ENCODE measurements at regions of chr1 and their contacts with region 1.

Region 1: GRCh38 chr1:232923739-232924386 is 26.5 kb upstream of the NTPCR start:
- DNase-seq: peak in 8 of 9 donors; percentile 46 to 90 (median 84)
- ATAC-seq: peak; percentile 96
- H3K4me3 ChIP-seq: no peak overlapping the region
- H3K4me3 Mint-ChIP-seq: peak overlapping the region; percentile 58 to 89 (median 80)
- H3K27ac ChIP-seq: peak overlapping the region; percentile 49
- H3K27ac Mint-ChIP-seq: peak overlapping the region; percentile 87 to 96 (median 93)
- H3K4me1 ChIP-seq: peaks cover 30 to 41% of the 10 kb centered on the region in 2 donors
- H3K4me1 Mint-ChIP-seq: peaks cover 36 to 64% (median 45%) of the 10 kb centered on the region in 7 donors
- H3K27me3 ChIP-seq: no peaks in the 10 kb centered on the region
- H3K27me3 Mint-ChIP-seq: no peaks in the 10 kb centered on the region

Region 2: DNA sequence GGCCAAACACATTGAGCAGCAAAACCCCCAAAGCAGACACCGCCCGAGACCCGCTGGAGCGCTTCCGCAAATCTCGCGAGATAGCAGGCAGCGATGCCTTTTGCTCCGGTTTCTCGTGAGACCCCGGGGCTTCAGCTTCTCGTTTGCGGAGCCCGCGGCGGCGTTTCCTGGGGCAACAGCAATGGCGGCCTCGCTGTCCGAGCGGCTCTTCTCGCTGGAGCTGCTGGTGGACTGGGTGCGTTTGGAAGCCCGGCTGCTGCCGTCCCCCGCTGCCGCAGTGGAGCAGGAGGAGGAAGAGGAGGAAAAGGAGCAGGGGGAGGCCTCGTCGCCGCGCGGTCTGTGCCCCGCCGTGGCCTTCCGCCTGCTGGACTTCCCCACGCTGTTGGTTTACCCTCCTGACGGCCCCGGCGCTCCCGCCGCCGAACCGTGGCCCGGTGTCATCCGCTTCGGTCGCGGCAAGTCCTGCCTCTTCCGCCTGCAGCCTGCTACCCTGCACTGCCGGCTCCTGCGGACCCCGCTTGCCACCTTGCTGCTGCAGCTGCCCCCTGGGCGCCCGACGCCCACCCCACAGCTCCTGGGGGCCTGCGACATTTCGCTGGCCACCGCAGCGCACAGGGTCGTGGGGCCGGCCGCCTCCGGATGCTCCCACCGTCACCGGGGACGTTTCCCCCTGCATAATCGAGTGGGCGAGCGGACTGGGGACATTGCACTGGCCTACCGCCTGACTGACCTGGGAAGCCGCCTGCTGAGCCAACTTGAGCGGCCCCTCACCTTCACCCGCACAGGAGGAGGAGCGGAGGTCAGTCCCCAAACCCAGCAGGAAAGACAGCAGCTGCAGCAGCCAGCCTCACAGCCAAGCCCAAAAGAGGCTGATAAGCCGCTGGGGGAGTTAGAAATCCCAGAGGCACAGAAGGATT is 118.3 kb before region 1 on chr1 and contains the start of gene MAP10:
- CTCF ChIA-PET with region 1: no interaction called
- POLR2A ChIA-PET with region 1: no interaction called
- intact Hi-C with region 1: loop called (anchors 10 kb)
- DNase-seq: peak; percentile 46 to 79 (median 69)
- ATAC-seq: peak; percentile 83
- H3K4me3 ChIP-seq: peak within 1 kb of the TSS; percentile 65
- H3K4me3 Mint-ChIP-seq: peak within 1 kb of the TSS; percentile 82 to 93 (median 88)
- H3K27ac ChIP-seq: peak within 1 kb of the TSS; percentile 64
- H3K27ac Mint-ChIP-seq: peak within 1 kb of the TSS; percentile 60 to 95 (median 87)
- H3K4me1 ChIP-seq: peaks cover 7 to 12% of the 10 kb centered on the region in 2 donors
- H3K4me1 Mint-ChIP-seq: peaks cover 10 to 35% (median 22%) of the 10 kb centered on the region in 7 donors
- H3K27me3 ChIP-seq: no peaks in the 10 kb centered on the region
- H3K27me3 Mint-ChIP-seq: peaks cover 0 to 12% (median 0%) of the 10 kb centered on the region in 5 donors
- total RNA-seq, gene MAP10: 1.5 to 4.5 (median 3.2) TPM

Region 3: DNA sequence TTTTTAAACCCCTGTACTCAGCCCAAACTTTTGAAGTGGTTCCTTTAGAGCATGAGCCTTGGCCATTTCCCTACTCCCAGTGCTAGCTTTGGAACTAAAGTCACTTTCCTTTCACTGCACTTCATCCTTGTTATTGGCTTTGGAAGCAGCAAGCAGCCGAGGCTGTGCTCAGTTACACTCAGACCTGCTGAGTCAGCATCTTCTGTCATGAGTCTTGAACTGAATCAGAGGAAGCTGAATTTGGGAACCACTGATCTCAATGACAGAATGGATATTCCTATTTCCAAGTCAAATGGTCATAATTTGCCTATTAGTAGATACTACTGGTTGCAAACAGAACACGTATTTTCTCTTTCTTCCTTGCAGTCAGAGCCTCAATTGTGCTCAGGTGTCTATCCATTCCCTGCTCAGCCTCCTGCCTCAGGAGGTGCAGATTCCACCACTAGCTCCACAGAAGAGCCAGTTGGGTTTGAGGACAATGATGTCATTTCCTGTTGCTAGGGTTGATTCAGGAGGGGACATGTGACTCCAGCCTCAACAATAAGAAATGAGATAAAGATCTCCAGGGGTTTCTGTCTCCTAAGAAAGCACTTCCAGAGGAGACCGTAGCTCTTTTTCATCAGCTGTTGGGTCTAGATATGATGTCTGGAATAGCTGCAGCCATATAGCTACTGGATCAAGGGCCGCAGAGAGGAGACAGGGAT is 18.4 kb before region 1 on chr1:
- CTCF ChIA-PET with region 1: no interaction called
- POLR2A ChIA-PET with region 1: no interaction called
- intact Hi-C with region 1: loop called in 1 of 2 experiments (anchors 1 kb)
- DNase-seq: no peak
- ATAC-seq: no peak
- H3K4me3 ChIP-seq: no peak overlapping the region
- H3K4me3 Mint-ChIP-seq: peak overlapping the region in 1 of 10 donors; percentile 72
- H3K27ac ChIP-seq: no peak overlapping the region
- H3K27ac Mint-ChIP-seq: peak overlapping the region in 3 of 9 donors; percentile 9 to 47 (median 37)
- H3K4me1 ChIP-seq: peaks cover 0 to 26% of the 10 kb centered on the region in 2 donors
- H3K4me1 Mint-ChIP-seq: peaks cover 25 to 63% (median 43%) of the 10 kb centered on the region in 7 donors
- H3K27me3 ChIP-seq: no peaks in the 10 kb centered on the region
- H3K27me3 Mint-ChIP-seq: peaks cover 0 to 4% (median 3%) of the 10 kb centered on the region in 5 donors

Region 4: GRCh38 chr1:233025157-233025915 is 101.5 kb after region 1 on chr1:
- CTCF ChIA-PET with region 1: no interaction called
- POLR2A ChIA-PET with region 1: no interaction called
- intact Hi-C with region 1: loop called in 1 of 2 experiments (anchors 10 kb)
- DNase-seq: peak in 4 of 9 donors; percentile 8 to 36 (median 17)
- ATAC-seq: peak; percentile 24
- H3K4me3 ChIP-seq: no peak overlapping the region
- H3K4me3 Mint-ChIP-seq: no peak overlapping the region
- H3K27ac ChIP-seq: no peak overlapping the region
- H3K27ac Mint-ChIP-seq: no peak overlapping the region
- H3K4me1 ChIP-seq: no peaks in the 10 kb centered on the region
- H3K4me1 Mint-ChIP-seq: peaks cover 0 to 5% (median 0%) of the 10 kb centered on the region in 7 donors
- H3K27me3 ChIP-seq: no peaks in the 10 kb centered on the region
- H3K27me3 Mint-ChIP-seq: no peaks in the 10 kb centered on the region

Region 5: DNA sequence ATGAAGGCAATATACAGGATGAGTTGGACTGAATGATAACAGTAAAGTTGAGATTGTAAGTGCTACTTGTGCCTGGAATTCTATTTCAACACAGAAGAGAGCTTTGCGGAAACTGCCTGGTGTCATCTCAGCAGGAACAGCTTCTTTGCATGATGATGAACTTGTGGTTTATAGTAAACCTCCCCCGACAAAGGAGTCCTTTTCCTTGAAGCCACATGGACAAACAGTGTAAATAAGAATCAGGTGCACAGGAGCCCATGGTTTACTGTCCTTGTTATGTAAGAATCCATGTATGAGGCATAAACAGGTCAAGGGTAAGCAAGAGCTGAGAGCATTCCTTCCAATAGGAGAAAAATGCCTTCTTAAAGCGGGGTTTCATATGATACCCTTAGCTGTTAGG is 305.4 kb after region 1 on chr1:
- CTCF ChIA-PET with region 1: no interaction called
- POLR2A ChIA-PET with region 1: no interaction called
- intact Hi-C with region 1: loop called in 1 of 2 experiments (anchors 5 kb)
- DNase-seq: no peak
- ATAC-seq: no peak
- H3K4me3 ChIP-seq: no peak overlapping the region
- H3K4me3 Mint-ChIP-seq: no peak overlapping the region
- H3K27ac ChIP-seq: no peak overlapping the region
- H3K27ac Mint-ChIP-seq: no peak overlapping the region
- H3K4me1 ChIP-seq: no peaks in the 10 kb centered on the region
- H3K4me1 Mint-ChIP-seq: peaks cover 0 to 18% (median 0%) of the 10 kb centered on the region in 7 donors
- H3K27me3 ChIP-seq: no peaks in the 10 kb centered on the region
- H3K27me3 Mint-ChIP-seq: no peaks in the 10 kb centered on the region